Cardiac septum (tissue), 1 donor: ENCODE measurements at regions of chr5 and their contacts with region 1.

Region 1: DNA sequence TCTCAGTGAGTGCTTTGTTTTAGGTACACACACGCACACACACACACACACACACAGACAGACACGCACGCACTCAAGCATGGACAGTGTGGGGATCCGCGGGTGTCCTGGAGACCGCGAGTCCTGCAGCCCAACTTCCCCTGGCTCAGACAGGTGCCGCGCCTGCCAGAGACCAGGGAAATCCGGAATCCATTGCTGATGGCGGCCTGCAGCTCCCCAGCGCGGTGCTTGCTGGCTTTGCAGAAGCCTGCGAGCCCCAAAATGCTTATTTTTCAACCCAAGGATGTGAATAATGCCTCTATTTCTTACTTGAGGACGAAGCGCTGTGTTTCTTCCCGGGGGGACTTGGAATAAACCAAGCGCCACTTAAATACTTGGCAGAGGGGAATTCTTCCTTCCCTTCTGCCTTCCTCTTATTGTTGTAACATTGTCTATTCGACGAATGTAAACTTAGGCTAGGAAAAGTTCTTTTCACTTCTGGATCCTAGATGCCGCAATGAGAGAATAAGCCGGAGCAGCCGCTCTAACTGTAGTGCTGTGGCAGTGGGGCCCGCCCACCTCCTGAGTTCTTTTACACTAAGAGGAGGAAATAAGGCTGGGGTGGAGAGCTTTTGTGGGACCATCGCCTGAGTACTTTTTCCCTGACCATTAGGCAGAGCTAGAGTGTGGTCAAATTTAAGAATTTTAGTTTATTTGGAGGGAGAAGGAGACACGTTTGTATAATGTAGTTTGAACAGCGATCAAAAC is 802 bp downstream of the ITGA2 start:
- DNase-seq: no peak

Region 2: DNA sequence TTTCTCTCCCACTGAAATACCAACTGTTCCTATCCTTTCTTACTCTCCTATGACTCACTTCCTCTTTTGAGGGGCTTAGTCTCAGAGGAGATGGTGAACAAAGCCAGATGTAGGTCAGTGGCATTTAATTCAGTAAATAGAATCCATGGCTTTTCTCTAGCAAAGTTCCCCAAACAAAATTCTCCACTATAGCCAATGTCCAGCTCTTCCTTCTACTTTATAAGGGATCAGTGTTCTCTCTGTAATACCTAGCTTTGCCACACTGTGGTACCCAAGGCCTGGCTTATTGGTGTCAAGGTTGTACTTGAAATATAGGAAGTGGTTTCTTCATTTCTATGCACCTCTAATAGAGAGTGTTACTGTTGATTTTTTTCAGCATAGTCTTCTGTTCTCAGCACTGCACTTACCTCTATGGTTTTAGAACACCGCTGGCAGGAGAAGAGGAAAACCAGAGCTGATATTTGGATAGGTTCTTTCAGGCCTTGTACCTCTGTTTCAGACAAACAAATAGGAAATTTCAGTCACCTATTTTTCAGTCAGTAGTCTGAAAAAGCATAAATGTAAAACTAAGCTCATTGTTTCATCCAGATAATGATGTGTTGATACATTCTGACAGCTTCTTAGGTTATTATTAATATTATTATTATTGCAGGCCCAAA is 41.4 kb before region 1 on chr5:
- intact Hi-C with region 1: loop called (anchors 5 kb)
- DNase-seq: no peak

Region 3: GRCh38 chr5:53027913-53028312 is 38.0 kb after region 1 on chr5:
- intact Hi-C with region 1: loop called (anchors 5 kb)
- DNase-seq: no peak